Posterior vena cava (tissue), 2 donors: ENCODE measurements at regions of chr13 and their contacts with region 1.

Region 1: DNA sequence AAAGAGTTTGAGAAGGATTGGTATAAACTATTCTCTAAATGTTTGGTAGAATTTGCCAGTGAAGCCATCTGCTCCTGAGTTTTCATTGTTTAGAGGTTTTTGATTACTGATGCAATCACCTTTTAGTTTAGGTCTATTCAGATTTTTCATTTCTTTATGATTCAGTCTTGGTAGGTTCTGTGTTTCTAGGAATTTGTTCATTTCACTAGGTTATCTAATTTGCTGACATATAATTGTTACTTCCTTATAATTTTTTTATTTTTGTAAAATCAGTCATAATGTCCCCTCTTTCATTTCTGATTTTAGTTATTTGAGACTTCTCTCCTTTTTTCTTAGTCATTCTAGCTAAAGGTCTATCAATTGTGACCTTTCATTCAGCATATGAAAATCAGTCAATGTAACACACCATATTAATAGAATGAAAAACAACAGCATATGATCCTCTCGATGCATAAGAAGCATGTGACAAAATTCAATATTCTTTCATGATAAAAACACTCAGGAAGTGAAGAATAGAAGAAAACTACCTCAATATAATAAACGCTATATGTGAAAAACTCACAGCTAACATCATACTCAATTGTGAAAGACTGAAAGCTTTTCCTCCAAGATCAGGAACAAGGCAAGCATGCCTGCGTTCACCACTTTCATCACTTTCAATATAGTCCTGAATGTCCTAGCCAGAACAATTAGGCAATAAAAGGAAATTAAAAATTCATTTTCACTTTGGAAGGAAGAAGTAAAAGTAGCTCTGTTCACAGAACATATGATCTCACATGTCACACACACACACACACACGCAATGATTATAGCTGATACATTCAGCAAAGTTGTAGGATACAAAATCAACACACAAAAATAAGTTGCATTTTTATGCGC is 149.1 kb downstream of the COG6 start:
- DNase-seq: no peak

Region 2: DNA sequence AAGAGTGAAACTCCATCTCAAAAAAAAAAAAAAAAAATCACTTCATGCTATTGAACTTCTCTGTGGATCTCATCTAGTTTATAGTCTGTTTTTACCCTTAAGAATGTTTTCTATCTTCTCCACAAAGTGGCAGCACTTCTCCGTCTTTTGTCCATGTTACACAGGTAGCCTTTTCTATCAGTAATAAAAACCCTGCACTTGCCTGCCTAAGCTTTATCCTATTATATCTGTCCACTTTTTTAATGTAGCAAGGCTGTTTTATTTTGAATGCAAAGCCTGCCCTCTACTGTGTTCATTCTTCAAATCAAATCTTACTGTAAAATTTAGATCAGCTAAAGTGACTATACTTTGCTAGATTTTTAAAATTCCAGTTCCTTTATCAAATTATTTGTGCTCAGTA is 937.9 kb before region 1 on chr13:
- intact Hi-C with region 1: no loop called
- DNase-seq: no peak

Region 3: GRCh38 chr13:39777527-39778061 is 27.0 kb before region 1 on chr13:
- intact Hi-C with region 1: loop called in 1 of 2 experiments (anchors 1 kb)
- DNase-seq: no peak

Region 4: DNA sequence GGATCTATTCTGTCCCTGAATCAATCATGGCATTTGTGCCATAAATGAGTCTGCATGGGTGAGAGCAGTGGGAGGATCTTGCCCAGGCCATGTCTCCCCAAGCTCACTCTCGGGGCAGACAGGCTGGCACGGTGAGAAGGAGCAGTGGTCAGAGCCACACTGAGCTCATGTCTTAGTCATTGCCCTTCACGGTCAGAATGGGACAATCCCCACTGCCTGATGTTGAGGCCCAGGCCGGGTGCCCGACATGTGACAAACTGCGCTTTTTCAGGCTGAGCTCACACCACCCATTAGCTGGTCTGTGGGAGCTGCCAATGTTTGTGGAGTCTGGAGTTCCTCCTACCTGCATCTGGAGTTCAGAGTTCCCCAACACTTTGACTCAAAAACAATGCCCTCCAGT is 332.8 kb after region 1 on chr13:
- intact Hi-C with region 1: no loop called
- DNase-seq: no peak